A549 (cell line): ENCODE measurements at regions of chr14 and their contacts with region 1.

Region 1: GRCh38 chr14:64478634-64479250 is 13.4 kb downstream of the AKAP5 start:
- DNase-seq: peak in 1 of 2 experiments; percentile 44
- ATAC-seq: peak in 1 of 2 experiments; percentile 43; a peak in 1 of 6 replicates
- H3K4me3 ChIP-seq: no peak overlapping the region
- H3K27ac ChIP-seq: no peak overlapping the region
- H3K4me1 ChIP-seq: no peaks in the 10 kb centered on the region
- CTCF ChIP-seq: peak; percentile 65
- EP300 ChIP-seq: no peak
- POLR2A ChIP-seq: no peak
- RAD21 ChIP-seq: peak; percentile 60 to 70

Region 2: GRCh38 chr14:64465191-64465822 is 13.4 kb before region 1 on chr14 and contains the start of gene AKAP5:
- CTCF ChIA-PET with region 1: interaction called, 41 read pairs
- POLR2A ChIA-PET with region 1: no interaction called
- DNase-seq: peak; percentile 28 to 43
- ATAC-seq: peak; percentile 85 to 89
- H3K4me3 ChIP-seq: peak within 1 kb of the TSS; percentile 86
- H3K27ac ChIP-seq: peak within 1 kb of the TSS; percentile 69 to 89
- H3K4me1 ChIP-seq: peaks cover 22% of the 10 kb centered on the region; the same call in 2 of the 3 replicates
- CTCF ChIP-seq: no peak
- EP300 ChIP-seq: no peak
- POLR2A ChIP-seq: no peak; the same call in 1 of the 2 replicates
- RAD21 ChIP-seq: no peak; a peak in 1 of 5 replicates
- polyA plus RNA-seq, gene AKAP5: 0.60 and 0.84 TPM in 2 replicates

Region 3: GRCh38 chr14:64496764-64497163 is 18.0 kb after region 1 on chr14:
- CTCF ChIA-PET with region 1: interaction called, 16 read pairs
- POLR2A ChIA-PET with region 1: no interaction called
- DNase-seq: no peak
- ATAC-seq: no peak
- H3K4me3 ChIP-seq: no peak overlapping the region
- H3K27ac ChIP-seq: no peak overlapping the region
- H3K4me1 ChIP-seq: peaks cover 23% of the 10 kb centered on the region
- CTCF ChIP-seq: no peak
- EP300 ChIP-seq: no peak
- POLR2A ChIP-seq: no peak
- RAD21 ChIP-seq: no peak

Region 4: GRCh38 chr14:64503478-64504309 is 25.0 kb after region 1 on chr14 and contains the start of gene ZBTB25:
- CTCF ChIA-PET with region 1: interaction called, 10 read pairs
- POLR2A ChIA-PET with region 1: interaction called, 3 read pairs
- DNase-seq: peak; percentile 80 to 94
- ATAC-seq: peak; percentile 68 to 81
- H3K4me3 ChIP-seq: peak within 1 kb of the TSS; percentile 76
- H3K27ac ChIP-seq: peak within 1 kb of the TSS; percentile 96 to 97
- H3K4me1 ChIP-seq: peaks cover 56% of the 10 kb centered on the region
- CTCF ChIP-seq: no peak
- EP300 ChIP-seq: peak in 1 of 2 experiments; percentile 43; a peak in 2 of 5 replicates
- POLR2A ChIP-seq: peak; percentile 52
- RAD21 ChIP-seq: peak in 1 of 2 experiments; percentile 14; a peak in 1 of 5 replicates
- polyA plus RNA-seq, gene ZBTB25: 15.0 and 16.1 TPM in 2 replicates